ENCODE measurements at regions of chr7 and their contacts with region 1.

Region 1: GRCh38 chr7:4712281-4713182 is 30.4 kb downstream of the FOXK1 start:
- DNase-seq: no peak
- ATAC-seq: no peak
- H3K4me3 ChIP-seq: no peak overlapping the region
- H3K4me3 Mint-ChIP-seq: no peak overlapping the region
- H3K27ac ChIP-seq: no peak overlapping the region
- H3K27ac Mint-ChIP-seq: peak overlapping the region in 1 of 2 donors; percentile 49
- H3K4me1 ChIP-seq: peaks cover 29% of the 10 kb centered on the region
- H3K4me1 Mint-ChIP-seq: peaks cover 59 to 63% of the 10 kb centered on the region in 2 donors
- H3K27me3 ChIP-seq: no peaks in the 10 kb centered on the region
- H3K27me3 Mint-ChIP-seq: no peaks in the 10 kb centered on the region
- CTCF ChIP-seq: no peak

Region 2: DNA sequence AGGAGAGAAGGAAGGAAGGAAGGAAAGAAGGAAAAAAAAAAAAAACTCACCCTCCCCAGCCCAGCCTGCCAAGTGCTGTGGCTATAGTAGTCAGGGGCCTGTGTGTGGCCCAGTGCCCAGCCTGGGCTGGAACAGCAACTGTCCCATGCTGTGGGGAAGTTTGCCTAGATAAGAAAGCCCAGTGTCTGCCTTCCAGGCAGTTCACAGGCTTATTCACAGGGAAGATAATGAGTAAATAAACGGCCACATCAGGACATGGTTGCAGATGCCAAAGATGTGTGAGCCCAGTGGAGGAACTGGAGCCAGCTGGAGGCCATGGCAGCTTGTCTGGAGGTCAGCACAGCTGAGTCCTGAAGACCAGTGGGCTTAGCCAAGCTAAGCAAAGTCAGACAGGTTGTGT is 162.9 kb before region 1 on chr7:
- intact Hi-C with region 1: no loop called
- DNase-seq: no peak
- ATAC-seq: no peak
- H3K4me3 ChIP-seq: no peak overlapping the region
- H3K4me3 Mint-ChIP-seq: no peak overlapping the region
- H3K27ac ChIP-seq: no peak overlapping the region
- H3K27ac Mint-ChIP-seq: no peak overlapping the region
- H3K4me1 ChIP-seq: no peaks in the 10 kb centered on the region
- H3K4me1 Mint-ChIP-seq: no peaks in the 10 kb centered on the region
- H3K27me3 ChIP-seq: no peaks in the 10 kb centered on the region
- H3K27me3 Mint-ChIP-seq: peaks cover 4 to 13% of the 10 kb centered on the region in 2 donors
- CTCF ChIP-seq: no peak

Region 3: GRCh38 chr7:4631664-4632171 is 80.8 kb before region 1 on chr7:
- intact Hi-C with region 1: no loop called
- DNase-seq: peak in 1 of 2 donors; percentile 25
- ATAC-seq: no peak
- H3K4me3 ChIP-seq: no peak overlapping the region
- H3K4me3 Mint-ChIP-seq: no peak overlapping the region
- H3K27ac ChIP-seq: no peak overlapping the region
- H3K27ac Mint-ChIP-seq: no peak overlapping the region
- H3K4me1 ChIP-seq: no peaks in the 10 kb centered on the region
- H3K4me1 Mint-ChIP-seq: no peaks in the 10 kb centered on the region
- H3K27me3 ChIP-seq: no peaks in the 10 kb centered on the region
- H3K27me3 Mint-ChIP-seq: peaks cover 0 to 10% of the 10 kb centered on the region in 2 donors
- CTCF ChIP-seq: no peak

Region 4: DNA sequence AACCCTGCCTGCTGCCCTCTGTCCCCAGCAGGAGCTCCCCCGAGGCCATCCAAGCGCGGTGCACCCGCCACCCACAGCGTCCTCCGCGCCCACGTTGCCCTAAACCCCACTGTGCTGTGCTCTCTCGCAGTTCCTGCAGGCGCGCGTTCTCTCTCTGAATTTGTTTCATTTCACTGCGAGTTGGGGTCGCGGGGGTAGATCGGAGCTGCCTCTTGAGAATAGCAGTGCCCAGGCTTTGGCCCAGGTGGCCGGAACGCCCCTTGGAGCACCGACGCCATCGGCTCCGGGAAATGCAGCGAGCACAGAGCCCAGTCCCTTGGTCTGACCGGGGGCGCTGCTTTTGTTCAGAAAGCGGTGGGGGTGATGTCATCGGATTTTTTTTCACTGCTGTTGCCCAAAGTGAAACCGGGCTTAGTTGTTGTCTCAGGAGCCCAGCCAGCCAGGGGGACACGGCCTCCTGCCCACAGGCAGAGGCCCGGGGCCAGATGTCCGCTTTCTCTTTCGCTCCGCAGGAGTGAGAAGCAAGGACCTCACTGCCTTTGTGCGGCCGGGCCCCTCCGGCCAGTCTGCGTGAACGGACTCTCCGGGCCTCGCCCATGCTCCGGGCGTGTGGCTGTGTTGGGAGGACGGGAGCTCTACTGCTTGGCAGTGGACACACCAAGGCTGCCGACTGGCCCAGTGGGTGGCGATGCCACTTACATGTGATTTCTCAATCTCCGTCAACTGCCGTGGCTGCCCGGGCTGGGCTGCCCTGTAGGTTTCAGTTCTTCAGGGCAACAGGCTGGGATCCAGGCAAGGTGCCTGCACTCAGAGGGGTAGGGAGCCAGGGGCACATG is 12.7 kb after region 1 on chr7:
- intact Hi-C with region 1: loop called (anchors 1 kb)
- DNase-seq: peak; percentile 64 to 77
- ATAC-seq: peak; percentile 84 to 88 (median 86)
- H3K4me3 ChIP-seq: peak overlapping the region; percentile 49
- H3K4me3 Mint-ChIP-seq: peak overlapping the region; percentile 95
- H3K27ac ChIP-seq: peak overlapping the region; percentile 92
- H3K27ac Mint-ChIP-seq: peak overlapping the region; percentile 96 to 97
- H3K4me1 ChIP-seq: peaks cover 29% of the 10 kb centered on the region
- H3K4me1 Mint-ChIP-seq: peaks cover 16 to 26% of the 10 kb centered on the region in 2 donors
- H3K27me3 ChIP-seq: no peaks in the 10 kb centered on the region
- H3K27me3 Mint-ChIP-seq: no peaks in the 10 kb centered on the region
- CTCF ChIP-seq: peak; percentile 10

Measured in natural killer cell (primary cell).